Posterior vena cava (tissue), 2 donors: ENCODE measurements at regions of chr4 and their contacts with region 1.

Region 1: GRCh38 chr4:7161721-7162214 is 30.6 kb upstream of the SORCS2 start:
- DNase-seq: peak; percentile 78

Region 2: GRCh38 chr4:6035786-6036185 is 1126.0 kb before region 1 on chr4:
- intact Hi-C with region 1: loop called in 1 of 2 experiments (anchors 5 kb)
- DNase-seq: no peak

Region 3: DNA sequence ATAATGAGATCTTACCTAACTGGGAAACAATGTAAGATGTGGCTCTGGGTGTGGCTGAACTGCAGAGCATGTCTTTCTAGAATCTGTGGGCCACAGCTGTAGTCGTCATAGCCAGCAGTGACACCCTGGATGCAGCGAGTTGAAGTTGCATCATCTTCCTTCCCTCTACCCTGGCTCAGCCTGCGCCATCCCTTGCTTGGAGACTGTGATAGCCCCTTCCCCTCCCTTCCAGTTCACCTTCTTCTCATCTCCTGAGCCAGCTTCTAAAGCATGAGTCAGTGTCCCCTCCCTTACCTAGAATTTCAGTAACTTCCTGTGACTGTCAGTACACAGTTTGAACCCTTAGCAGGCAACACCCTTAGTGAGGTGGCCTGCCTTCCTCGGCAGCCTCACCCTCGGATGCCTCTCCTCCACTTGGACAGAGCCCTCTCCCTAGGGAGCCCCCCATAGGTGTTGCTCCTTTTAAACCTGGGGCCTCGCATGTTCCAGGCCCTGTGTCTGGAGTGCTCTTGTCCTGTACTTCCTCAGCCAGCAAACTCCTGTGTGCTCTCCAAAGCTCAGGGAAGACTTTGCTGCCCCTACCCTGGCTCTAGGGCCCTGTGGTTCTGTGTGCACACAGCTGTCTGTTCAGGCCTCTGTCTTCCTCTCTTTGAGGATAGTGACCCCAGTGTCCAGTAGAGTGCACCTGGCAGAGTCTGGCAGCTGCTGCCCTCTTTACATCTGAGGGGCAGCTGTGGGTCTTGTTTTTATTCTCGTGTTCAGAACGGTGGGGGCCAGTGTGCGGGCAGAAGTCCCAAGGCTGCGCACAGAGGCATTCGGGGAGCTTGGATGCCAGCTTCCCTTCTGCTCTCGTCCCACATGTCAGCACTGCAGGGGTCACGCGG is 162.4 kb before region 1 on chr4:
- intact Hi-C with region 1: no loop called
- DNase-seq: no peak